Activated naive CD4-positive, alpha-beta T cell treated with anti-CD3 and anti-CD28 coated beads for 36 hours (primary cell): ENCODE measurements at regions of chr17 and their contacts with region 1.

Region 1: DNA sequence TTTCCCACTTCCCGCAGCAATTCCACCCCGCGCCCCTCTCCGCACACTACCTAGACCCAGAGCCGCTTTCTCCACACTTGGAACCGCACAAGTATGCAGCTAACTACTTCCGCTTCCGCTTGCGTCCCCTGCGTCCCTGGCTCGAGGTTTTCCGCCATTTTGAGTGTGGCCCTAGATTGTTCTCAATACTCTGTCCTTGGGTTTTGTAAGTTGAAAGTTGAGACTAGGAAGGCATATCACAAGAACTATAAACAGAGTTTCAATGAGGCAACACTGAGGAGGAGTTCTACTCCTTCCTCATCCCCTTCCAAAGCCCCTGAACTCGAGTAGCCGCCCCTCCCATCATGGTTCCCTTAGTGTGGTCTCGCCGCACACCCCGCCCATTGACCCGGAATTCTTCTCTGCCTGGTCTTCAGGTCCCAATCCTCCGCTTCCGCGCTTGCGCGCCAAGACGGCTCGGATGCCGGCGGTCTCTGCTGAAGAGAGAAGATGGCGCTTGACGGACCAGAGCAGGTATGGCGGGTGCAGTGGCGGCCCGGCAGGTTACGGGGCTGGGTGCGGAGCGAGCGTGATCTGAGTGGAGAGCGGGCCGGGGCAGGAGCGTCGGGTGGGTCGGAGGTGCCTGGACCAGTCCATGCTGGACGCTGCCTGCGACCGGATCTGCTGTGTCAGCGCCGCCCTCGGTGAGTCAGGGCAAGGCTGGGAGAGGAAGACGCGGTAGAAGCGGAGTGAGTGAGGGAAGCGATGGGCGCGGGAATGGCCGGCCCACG is at the starts of genes FTSJ3 and PSMC5:
- DNase-seq: peak; percentile 97
- H3K4me3 Mint-ChIP-seq: peak within 1 kb of the TSS; percentile 96
- H3K27ac Mint-ChIP-seq: peak within 1 kb of the TSS; percentile 99
- H3K4me1 Mint-ChIP-seq: peaks cover 82% of the 10 kb centered on the region
- H3K27me3 Mint-ChIP-seq: no peaks in the 10 kb centered on the region
- total RNA-seq, gene FTSJ3: 25.3 to 26.2 TPM
- total RNA-seq, gene PSMC5: 144 to 154 TPM

Region 2: GRCh38 chr17:63773381-63774140 is 53.6 kb before region 1 on chr17 and contains the start of gene CCDC47:
- CTCF ChIA-PET with region 1: interaction called, 3 read pairs
- intact Hi-C with region 1: loop called (anchors 1 kb)
- DNase-seq: peak; percentile 99
- H3K4me3 Mint-ChIP-seq: peak within 1 kb of the TSS; percentile 98
- H3K27ac Mint-ChIP-seq: peak within 1 kb of the TSS; percentile 100
- H3K4me1 Mint-ChIP-seq: peaks cover 58% of the 10 kb centered on the region
- H3K27me3 Mint-ChIP-seq: no peaks in the 10 kb centered on the region
- total RNA-seq, gene CCDC47: 40.5 to 42.1 TPM

Region 3: DNA sequence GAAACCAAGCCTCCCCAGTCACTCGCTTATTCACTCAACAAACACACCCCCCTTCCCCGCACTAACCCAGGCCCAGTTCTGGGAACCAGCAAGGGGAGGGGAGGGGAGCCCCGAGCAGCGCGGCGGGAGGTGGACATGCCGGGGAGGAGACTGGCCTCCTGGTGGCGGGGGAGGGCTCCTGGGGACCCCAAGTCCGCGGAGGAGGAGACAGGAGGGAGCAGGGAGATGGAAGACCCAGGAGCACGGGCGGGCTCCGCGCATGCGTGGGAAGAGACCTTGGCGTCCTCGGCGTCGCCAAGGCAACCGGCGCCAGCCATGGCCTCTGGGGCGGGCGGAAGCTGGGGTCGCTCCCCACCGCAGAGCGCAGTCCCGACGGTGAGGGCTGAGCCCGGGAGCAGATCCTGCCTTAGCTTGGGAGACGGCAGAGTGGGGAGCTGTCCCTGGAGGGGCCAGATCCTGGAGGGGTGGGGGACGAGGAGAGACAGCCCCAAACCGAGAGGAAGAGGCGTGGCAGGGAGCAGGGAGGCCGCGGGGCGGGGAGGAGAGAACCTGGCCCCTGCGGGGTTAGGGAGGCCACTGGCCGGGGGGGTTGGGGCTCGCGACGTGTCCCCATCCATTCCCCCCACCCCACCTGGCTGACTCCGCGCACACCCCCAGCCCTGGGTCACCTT is 171.0 kb after region 1 on chr17 and contains the start of gene PRR29:
- CTCF ChIA-PET with region 1: no interaction called
- intact Hi-C with region 1: no loop called
- DNase-seq: peak; percentile 71
- H3K4me3 Mint-ChIP-seq: peak within 1 kb of the TSS; percentile 86
- H3K27ac Mint-ChIP-seq: no peak within 1 kb of the TSS
- H3K4me1 Mint-ChIP-seq: peaks cover 27% of the 10 kb centered on the region
- H3K27me3 Mint-ChIP-seq: no peaks in the 10 kb centered on the region
- total RNA-seq, gene PRR29: 0.21 to 0.44 TPM